SK-N-SH (cell line): ENCODE measurements at regions of chr7 and their contacts with region 1.

Region 1: DNA sequence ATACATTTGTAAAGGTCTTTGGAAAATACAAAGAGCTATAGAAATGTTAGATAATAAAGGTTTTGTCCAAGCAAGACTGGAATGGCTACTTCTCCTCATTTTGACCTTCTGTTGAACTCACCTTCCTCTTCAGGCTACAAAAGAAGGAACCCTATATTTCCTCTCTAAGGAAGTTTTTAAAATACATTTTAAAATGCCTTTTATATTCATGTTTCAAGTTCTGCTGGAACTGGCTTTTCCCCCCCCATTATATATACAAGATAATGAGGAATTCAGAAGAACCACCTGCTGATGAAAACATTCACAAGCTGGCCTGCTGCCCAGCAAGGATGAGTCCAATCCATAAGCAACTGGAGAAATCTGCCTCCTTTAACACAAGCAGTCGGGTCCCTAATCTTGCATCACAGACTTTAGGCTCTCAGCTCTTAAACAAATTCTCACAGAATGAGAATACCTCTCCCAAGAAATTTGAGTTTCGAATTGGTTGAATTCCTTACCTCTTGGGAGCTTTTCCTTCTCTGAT is 44.6 kb downstream of the MTERF1 start:
- DNase-seq: no peak
- H3K4me3 ChIP-seq: no peak overlapping the region
- H3K27ac ChIP-seq: no peak overlapping the region
- H3K4me1 ChIP-seq: peaks cover 0 to 5% of the 10 kb centered on the region in 2 experiments; a peak in 3 of 4 replicates
- H3K27me3 ChIP-seq: no peaks in the 10 kb centered on the region
- CTCF ChIP-seq: no peak
- EP300 ChIP-seq: no peak
- RAD21 ChIP-seq: no peak

Region 2: DNA sequence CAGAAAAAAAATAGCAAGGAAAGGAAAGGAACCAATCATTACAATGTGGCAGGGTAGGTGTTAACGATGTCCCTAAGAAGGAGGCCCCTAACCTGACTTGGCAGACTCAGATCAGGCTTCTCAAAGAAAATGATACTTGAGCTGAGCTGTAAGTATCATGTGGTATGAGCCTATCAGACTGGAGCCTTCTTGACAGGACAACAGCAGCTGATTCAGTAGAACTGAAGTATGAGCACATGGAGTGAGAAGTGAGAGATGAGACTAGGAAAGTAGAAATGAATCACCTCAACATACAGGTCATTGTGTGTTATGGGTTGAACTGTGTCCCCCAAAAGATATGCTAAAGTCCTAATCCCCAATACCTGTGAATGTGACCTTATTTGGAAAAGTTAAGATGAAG is 21.7 kb before region 1 on chr7:
- CTCF ChIA-PET with region 1: interaction called, 28 read pairs
- POLR2A ChIA-PET with region 1: no interaction called
- DNase-seq: no peak
- H3K4me3 ChIP-seq: no peak overlapping the region
- H3K27ac ChIP-seq: no peak overlapping the region
- H3K4me1 ChIP-seq: no peaks in the 10 kb centered on the region
- H3K27me3 ChIP-seq: no peaks in the 10 kb centered on the region
- CTCF ChIP-seq: no peak
- EP300 ChIP-seq: no peak
- RAD21 ChIP-seq: no peak

Region 3: GRCh38 chr7:91852263-91852741 is 16.4 kb after region 1 on chr7:
- CTCF ChIA-PET with region 1: interaction called, 12 read pairs
- POLR2A ChIA-PET with region 1: no interaction called
- DNase-seq: no peak
- H3K4me3 ChIP-seq: no peak overlapping the region
- H3K27ac ChIP-seq: no peak overlapping the region
- H3K4me1 ChIP-seq: no peaks in the 10 kb centered on the region
- H3K27me3 ChIP-seq: no peaks in the 10 kb centered on the region
- CTCF ChIP-seq: peak; percentile 23; the same call in 1 of the 2 replicates
- EP300 ChIP-seq: no peak
- RAD21 ChIP-seq: 0 out of 2 replicates have a peak, but pooled peaks have one; percentile 14

Region 4: DNA sequence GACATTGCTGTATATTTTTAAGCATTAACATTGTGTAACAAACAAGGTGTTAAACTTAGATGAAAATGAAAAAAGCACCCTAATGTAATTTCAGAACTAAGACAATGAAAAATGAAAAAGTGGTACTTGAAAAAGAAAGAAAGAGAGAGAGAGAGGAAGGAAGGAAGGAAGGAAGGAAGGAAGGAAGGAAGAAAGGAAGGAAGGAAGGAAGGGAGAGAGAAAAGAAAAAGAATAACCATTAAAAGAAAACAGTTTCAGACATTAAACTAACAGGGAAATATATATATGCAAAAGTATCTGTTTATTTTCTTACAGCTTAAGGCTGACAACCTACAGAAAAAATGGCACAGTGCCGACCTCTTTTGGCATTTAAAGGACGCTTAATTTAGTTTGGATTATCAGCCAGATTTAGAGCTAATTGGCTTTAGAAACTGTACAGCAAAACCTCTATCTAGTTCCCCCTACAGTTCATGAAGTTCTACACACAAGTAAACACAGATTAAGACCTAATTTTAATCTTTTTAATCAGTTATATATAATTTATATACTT is 30.8 kb after region 1 on chr7:
- CTCF ChIA-PET with region 1: interaction called, 20 read pairs
- POLR2A ChIA-PET with region 1: no interaction called
- DNase-seq: no peak
- H3K4me3 ChIP-seq: no peak overlapping the region
- H3K27ac ChIP-seq: no peak overlapping the region
- H3K4me1 ChIP-seq: no peaks in the 10 kb centered on the region; a peak in 3 of 4 replicates
- H3K27me3 ChIP-seq: no peaks in the 10 kb centered on the region
- CTCF ChIP-seq: no peak
- EP300 ChIP-seq: no peak
- RAD21 ChIP-seq: peak; percentile 13; the same call in 1 of the 2 replicates